ENCODE measurements at regions of chr5 and their contacts with region 1.

Region 1: GRCh38 chr5:133977161-133977787 is 8.8 kb upstream of the C5orf15 start:
- DNase-seq: peak; percentile 60
- H3K4me3 Mint-ChIP-seq: no peak overlapping the region
- H3K27ac Mint-ChIP-seq: peak overlapping the region; percentile 75
- H3K4me1 Mint-ChIP-seq: peaks cover 32% of the 10 kb centered on the region
- H3K27me3 Mint-ChIP-seq: no peaks in the 10 kb centered on the region

Region 2: GRCh38 chr5:133877351-133878235 is 99.7 kb before region 1 on chr5:
- CTCF ChIA-PET with region 1: no interaction called
- intact Hi-C with region 1: loop called (anchors 2 kb)
- DNase-seq: no peak
- H3K4me3 Mint-ChIP-seq: no peak overlapping the region
- H3K27ac Mint-ChIP-seq: no peak overlapping the region
- H3K4me1 Mint-ChIP-seq: peaks cover 48% of the 10 kb centered on the region
- H3K27me3 Mint-ChIP-seq: peaks cover 2% of the 10 kb centered on the region

Region 3: GRCh38 chr5:133907075-133907474 is 70.2 kb before region 1 on chr5:
- CTCF ChIA-PET with region 1: no interaction called
- intact Hi-C with region 1: loop called (anchors 5 kb)
- DNase-seq: no peak
- H3K4me3 Mint-ChIP-seq: no peak overlapping the region
- H3K27ac Mint-ChIP-seq: no peak overlapping the region
- H3K4me1 Mint-ChIP-seq: no peaks in the 10 kb centered on the region
- H3K27me3 Mint-ChIP-seq: no peaks in the 10 kb centered on the region

Region 4: DNA sequence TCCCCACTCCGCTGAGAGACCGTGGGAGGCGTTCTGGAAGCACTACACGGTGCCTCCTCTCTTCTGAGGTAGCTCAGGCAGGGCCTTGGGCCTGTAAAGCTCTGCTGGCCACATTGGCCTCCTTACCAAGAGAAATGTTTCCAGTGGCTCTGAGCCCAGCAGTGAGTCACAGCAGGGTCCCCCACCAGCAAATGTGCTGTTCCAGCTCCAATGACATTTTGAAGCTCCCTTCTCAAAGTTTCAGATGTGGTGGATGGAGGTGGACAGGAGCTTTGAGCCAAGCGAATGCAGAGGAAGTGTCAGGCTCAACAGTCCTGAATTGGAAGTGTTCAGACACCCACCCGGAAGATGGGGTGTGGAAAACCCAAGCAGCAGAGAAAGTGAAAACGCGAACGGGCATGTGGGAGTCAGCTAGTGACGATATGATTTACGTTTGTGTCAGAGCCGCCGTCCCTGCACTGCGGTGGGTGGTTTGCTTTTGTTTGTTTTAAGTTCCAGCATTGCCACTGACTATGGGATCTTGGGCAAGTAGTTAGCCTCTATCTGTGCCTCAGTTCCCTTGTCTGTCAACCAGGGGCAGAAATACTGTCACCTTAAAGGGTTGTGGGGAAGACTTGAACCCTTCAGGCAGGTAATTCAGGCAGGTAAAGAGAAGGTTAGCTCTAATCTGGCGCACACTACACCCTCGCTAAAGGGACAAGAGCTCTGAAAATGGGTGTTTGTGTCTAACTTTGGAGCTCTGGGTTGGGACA is 47.0 kb before region 1 on chr5:
- CTCF ChIA-PET with region 1: no interaction called
- intact Hi-C with region 1: loop called (anchors 1 kb)
- DNase-seq: peak; percentile 88
- H3K4me3 Mint-ChIP-seq: peak overlapping the region; percentile 80
- H3K27ac Mint-ChIP-seq: peak overlapping the region; percentile 97
- H3K4me1 Mint-ChIP-seq: peaks cover 45% of the 10 kb centered on the region
- H3K27me3 Mint-ChIP-seq: no peaks in the 10 kb centered on the region

Region 5: GRCh38 chr5:133962801-133963476 is 14.3 kb before region 1 on chr5:
- CTCF ChIA-PET with region 1: interaction called, 10 read pairs
- intact Hi-C with region 1: loop called (anchors 1 kb)
- DNase-seq: no peak
- H3K4me3 Mint-ChIP-seq: no peak overlapping the region
- H3K27ac Mint-ChIP-seq: peak overlapping the region; percentile 60
- H3K4me1 Mint-ChIP-seq: peaks cover 65% of the 10 kb centered on the region
- H3K27me3 Mint-ChIP-seq: no peaks in the 10 kb centered on the region

Region 6: DNA sequence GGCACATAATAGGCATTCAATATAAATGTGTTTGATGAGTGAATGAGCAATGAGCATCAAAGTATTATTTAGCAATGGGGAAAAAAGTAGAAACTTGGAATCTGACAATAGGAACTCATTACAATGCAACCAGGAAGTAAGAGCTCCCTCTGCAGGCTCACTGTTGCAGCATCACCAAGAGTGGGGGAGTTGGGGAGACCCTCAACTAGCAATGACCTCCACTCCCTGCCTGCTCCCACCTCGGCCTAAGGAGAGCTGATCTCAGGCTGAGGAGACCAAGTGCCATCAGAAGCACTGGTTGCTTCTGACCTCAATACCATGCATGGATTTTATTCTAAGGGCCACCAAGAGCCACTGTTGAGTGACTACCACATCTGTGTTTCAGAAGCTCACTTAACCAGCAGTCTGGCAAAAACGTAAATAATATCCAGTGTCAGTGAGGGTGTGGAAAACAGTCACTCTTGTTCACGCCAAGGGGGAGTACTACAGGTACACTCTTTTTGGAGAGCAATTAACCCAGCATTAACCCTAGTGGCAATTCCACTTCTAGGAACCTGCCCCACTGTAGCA is 19.5 kb after region 1 on chr5:
- CTCF ChIA-PET with region 1: interaction called, 14 read pairs
- intact Hi-C with region 1: no loop called
- DNase-seq: no peak
- H3K4me3 Mint-ChIP-seq: no peak overlapping the region
- H3K27ac Mint-ChIP-seq: no peak overlapping the region
- H3K4me1 Mint-ChIP-seq: peaks cover 66% of the 10 kb centered on the region
- H3K27me3 Mint-ChIP-seq: no peaks in the 10 kb centered on the region